Endothelial cell of umbilical vein (primary cell): ENCODE measurements at regions of chr9 and their contacts with region 1.

Region 1: DNA sequence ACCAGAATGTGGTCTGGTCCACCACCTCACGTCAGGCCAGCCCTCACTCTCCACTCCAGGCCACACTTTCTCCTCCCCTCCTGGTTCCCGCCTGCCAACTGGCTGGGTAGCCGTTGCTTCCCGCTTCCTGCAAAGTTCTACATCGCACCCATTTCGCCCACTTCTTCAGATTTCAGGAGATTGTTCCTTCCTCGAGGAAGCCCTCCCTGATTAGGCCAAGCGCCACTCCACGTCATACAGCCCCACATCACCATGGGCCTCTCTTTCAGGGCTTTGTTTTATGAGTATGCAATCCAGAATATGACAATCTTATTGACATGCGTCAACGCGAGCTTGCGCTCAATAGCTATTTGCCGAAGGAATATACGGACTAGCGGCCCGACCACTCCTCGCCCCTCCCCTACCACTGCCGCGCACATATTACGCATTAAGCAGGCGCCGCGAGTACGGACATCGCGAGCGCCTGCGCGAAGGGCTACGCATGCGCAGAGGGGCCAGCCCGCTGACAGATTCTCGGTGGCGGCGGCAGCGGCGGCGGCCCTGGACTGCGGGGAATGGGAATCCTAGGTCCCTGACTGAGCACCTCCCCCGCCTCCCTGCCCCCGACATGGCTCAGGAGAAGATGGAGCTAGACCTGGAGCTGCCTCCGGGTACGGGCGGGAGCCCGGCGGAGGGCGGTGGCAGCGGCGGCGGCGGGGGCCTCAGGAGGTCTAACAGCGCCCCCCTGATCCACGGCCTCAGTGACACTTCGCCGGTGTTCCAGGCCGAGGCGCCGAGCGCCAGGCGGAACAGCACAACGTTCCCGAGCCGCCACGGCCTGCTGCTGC is 74.7 kb downstream of the PIP5K1B start:
- DNase-seq: peak; percentile 96
- H3K4me3 ChIP-seq: peak overlapping the region; percentile 52 to 71 (median 62)
- H3K27ac ChIP-seq: peak overlapping the region; percentile 87
- H3K4me1 ChIP-seq: peaks cover 26% of the 10 kb centered on the region
- H3K27me3 ChIP-seq: peaks cover 5% of the 10 kb centered on the region in 2 experiments
- CTCF ChIP-seq: peak; percentile 27 to 49
- POLR2A ChIP-seq: peak; percentile 54

Region 2: DNA sequence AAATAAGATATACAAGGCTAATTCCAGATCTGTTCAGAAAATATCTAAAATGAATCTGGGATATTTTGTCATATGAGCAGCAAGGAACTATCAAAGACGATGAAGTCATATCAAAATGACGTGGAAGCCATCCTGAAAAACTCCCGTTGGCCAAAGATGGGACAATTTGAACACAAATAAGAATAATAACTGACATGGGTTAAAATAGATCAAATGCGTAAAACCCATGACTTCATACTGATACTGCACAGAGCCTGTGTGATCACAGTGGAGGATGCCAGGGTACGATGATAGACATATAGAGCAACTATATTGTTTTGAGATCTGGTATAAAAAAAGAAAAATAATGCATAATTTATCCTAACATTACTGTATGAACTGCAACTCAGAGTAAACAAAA is 125.7 kb before region 1 on chr9:
- CTCF ChIA-PET with region 1: no interaction called
- POLR2A ChIA-PET with region 1: no interaction called
- dilution Hi-C with region 1: no loop called
- intact Hi-C with region 1: no loop called
- DNase-seq: no peak
- H3K4me3 ChIP-seq: no peak overlapping the region
- H3K27ac ChIP-seq: no peak overlapping the region
- H3K4me1 ChIP-seq: no peaks in the 10 kb centered on the region
- H3K27me3 ChIP-seq: peaks cover 0 to 4% of the 10 kb centered on the region in 2 experiments
- CTCF ChIP-seq: no peak
- POLR2A ChIP-seq: no peak

Region 3: GRCh38 chr9:68704814-68705530 is 74.8 kb before region 1 on chr9 and contains the start of gene PIP5K1B:
- CTCF ChIA-PET with region 1: no interaction called
- POLR2A ChIA-PET with region 1: no interaction called
- dilution Hi-C with region 1: no loop called
- intact Hi-C with region 1: loop called (anchors 5 kb)
- DNase-seq: peak; percentile 32
- H3K4me3 ChIP-seq: peak within 1 kb of the TSS in 2 of 3 experiments; percentile 37 to 52
- H3K27ac ChIP-seq: no peak within 1 kb of the TSS
- H3K4me1 ChIP-seq: no peaks in the 10 kb centered on the region
- H3K27me3 ChIP-seq: peaks cover 39 to 49% of the 10 kb centered on the region in 2 experiments
- CTCF ChIP-seq: no peak
- POLR2A ChIP-seq: no peak
- total RNA-seq, gene PIP5K1B: 0.27 TPM in 1 of 2 replicates, not detected in the other

Region 4: DNA sequence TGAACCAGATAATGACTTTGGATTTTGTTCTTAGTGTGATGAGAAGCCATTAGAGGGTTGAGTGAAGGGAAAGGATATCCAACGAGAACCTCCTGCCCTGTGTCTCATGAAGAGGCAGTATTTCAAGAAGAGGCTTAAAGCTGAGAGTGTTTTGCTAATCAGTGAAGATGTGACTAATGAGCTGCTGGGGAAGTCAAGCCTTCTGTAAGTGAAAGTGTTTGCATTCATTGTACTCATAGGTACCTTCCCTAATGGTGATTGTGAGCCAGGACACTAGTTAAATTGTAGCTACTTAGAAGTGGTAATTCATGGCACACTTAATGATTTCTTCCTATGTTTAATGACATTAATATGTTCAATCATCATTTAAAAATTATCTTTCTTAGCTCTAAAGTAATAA is 51.0 kb before region 1 on chr9:
- CTCF ChIA-PET with region 1: no interaction called
- POLR2A ChIA-PET with region 1: no interaction called
- dilution Hi-C with region 1: no loop called
- intact Hi-C with region 1: no loop called
- DNase-seq: no peak
- H3K4me3 ChIP-seq: no peak overlapping the region
- H3K27ac ChIP-seq: no peak overlapping the region
- H3K4me1 ChIP-seq: no peaks in the 10 kb centered on the region
- H3K27me3 ChIP-seq: peaks cover 0 to 5% of the 10 kb centered on the region in 2 experiments
- CTCF ChIP-seq: no peak
- POLR2A ChIP-seq: no peak

Region 5: GRCh38 chr9:68768619-68769018 is 11.2 kb before region 1 on chr9:
- CTCF ChIA-PET with region 1: no interaction called
- POLR2A ChIA-PET with region 1: no interaction called
- dilution Hi-C with region 1: no loop called
- intact Hi-C with region 1: no loop called
- DNase-seq: no peak
- H3K4me3 ChIP-seq: no peak overlapping the region
- H3K27ac ChIP-seq: no peak overlapping the region
- H3K4me1 ChIP-seq: no peaks in the 10 kb centered on the region
- H3K27me3 ChIP-seq: peaks cover 6 to 22% of the 10 kb centered on the region in 2 experiments
- CTCF ChIP-seq: no peak
- POLR2A ChIP-seq: no peak

Region 6: DNA sequence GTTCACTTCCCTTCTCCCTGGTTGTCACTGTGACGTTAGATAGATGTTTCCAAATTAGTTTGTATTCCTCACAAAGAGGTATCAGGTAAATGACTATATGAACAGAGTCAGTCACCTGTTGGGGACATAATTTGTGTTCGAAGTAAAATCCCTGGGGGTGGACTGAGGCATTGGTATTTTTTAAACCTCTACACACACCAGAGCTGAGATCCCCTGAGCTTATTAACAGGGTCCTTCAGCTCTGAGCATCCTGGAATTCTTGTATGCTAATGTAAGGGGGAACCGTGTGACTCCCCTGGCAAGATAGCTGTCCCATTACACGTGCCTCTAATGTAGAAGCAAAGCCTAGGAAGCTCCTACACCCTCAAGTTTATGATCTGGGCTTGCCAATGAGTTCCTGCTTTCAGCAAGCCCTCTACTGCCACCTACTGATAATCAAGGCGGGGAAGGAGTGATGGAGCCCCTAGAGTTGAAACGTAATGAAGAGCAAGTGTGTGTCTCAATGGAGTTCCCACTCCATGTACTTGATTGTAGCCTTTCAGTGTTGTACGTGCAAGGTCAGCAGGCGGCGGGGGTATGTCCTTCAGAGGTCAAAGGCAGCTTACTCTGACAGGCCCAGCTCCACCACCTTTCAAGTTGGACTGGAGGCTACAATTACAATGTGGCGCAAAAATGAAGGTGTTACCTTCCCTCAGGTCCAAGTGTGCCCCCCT is 219.8 kb after region 1 on chr9:
- CTCF ChIA-PET with region 1: no interaction called
- POLR2A ChIA-PET with region 1: no interaction called
- dilution Hi-C with region 1: no loop called
- intact Hi-C with region 1: loop called (anchors 1 kb)
- DNase-seq: peak; percentile 67
- H3K4me3 ChIP-seq: no peak overlapping the region
- H3K27ac ChIP-seq: no peak overlapping the region
- H3K4me1 ChIP-seq: no peaks in the 10 kb centered on the region
- H3K27me3 ChIP-seq: peaks cover 2 to 8% of the 10 kb centered on the region in 2 experiments
- CTCF ChIP-seq: peak; percentile 71 to 77
- POLR2A ChIP-seq: no peak

Region 7: GRCh38 chr9:69027355-69028096 is 247.8 kb after region 1 on chr9:
- CTCF ChIA-PET with region 1: no interaction called
- POLR2A ChIA-PET with region 1: no interaction called
- dilution Hi-C with region 1: no loop called
- intact Hi-C with region 1: loop called (anchors 5 kb)
- DNase-seq: peak; percentile 53
- H3K4me3 ChIP-seq: no peak overlapping the region
- H3K27ac ChIP-seq: no peak overlapping the region
- H3K4me1 ChIP-seq: peaks cover 9% of the 10 kb centered on the region
- H3K27me3 ChIP-seq: peaks cover 2 to 7% of the 10 kb centered on the region in 2 experiments
- CTCF ChIP-seq: peak; percentile 69 to 74
- POLR2A ChIP-seq: no peak